Activated CD4-positive, alpha-beta T cell treated with anti-CD3 and anti-CD28 coated beads, Interleukin-2, amount 10 ng/mL, durations not matched to agents 24 days and 14 days (primary cell): ENCODE measurements at regions of chr10 and their contacts with region 1.

Region 1: GRCh38 chr10:28663576-28664313 is 13.6 kb upstream of the BAMBI start:
- DNase-seq: peak; percentile 90
- H3K4me3 Mint-ChIP-seq: no peak overlapping the region
- H3K27ac Mint-ChIP-seq: no peak overlapping the region
- H3K4me1 Mint-ChIP-seq: peaks cover 4% of the 10 kb centered on the region
- H3K27me3 Mint-ChIP-seq: peaks cover 33% of the 10 kb centered on the region

Region 2: DNA sequence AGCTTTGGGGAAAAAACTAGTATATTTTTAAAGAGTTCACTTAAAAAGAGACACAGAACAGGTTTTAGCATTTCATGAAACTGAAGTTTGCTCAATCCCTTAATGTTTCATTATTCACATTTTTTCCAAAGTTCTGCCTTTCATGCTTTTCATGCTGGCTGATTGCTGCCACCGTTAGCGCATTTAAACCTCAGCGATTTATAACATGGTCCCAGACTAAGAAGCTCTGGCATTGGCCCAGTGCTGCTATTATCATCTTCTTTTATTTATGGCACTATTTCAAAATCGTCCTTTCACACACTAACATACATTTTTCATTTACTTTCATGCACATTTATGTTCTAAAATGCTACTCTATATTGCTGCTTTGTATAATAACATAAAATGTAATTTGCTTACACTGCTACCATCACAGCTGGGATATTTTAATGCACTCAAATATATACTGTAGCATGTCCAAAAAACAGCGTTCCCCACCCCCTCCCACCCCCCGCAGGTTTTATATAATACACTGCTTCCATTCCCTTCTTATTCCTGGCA is 502.8 kb before region 1 on chr10:
- intact Hi-C with region 1: no loop called
- DNase-seq: no peak
- H3K4me3 Mint-ChIP-seq: no peak overlapping the region
- H3K27ac Mint-ChIP-seq: no peak overlapping the region
- H3K4me1 Mint-ChIP-seq: no peaks in the 10 kb centered on the region
- H3K27me3 Mint-ChIP-seq: no peaks in the 10 kb centered on the region

Region 3: GRCh38 chr10:28604567-28605536 is 58.9 kb before region 1 on chr10:
- intact Hi-C with region 1: loop called (anchors 2 kb)
- DNase-seq: no peak
- H3K4me3 Mint-ChIP-seq: no peak overlapping the region
- H3K27ac Mint-ChIP-seq: no peak overlapping the region
- H3K4me1 Mint-ChIP-seq: peaks cover 20% of the 10 kb centered on the region
- H3K27me3 Mint-ChIP-seq: no peaks in the 10 kb centered on the region

Region 4: DNA sequence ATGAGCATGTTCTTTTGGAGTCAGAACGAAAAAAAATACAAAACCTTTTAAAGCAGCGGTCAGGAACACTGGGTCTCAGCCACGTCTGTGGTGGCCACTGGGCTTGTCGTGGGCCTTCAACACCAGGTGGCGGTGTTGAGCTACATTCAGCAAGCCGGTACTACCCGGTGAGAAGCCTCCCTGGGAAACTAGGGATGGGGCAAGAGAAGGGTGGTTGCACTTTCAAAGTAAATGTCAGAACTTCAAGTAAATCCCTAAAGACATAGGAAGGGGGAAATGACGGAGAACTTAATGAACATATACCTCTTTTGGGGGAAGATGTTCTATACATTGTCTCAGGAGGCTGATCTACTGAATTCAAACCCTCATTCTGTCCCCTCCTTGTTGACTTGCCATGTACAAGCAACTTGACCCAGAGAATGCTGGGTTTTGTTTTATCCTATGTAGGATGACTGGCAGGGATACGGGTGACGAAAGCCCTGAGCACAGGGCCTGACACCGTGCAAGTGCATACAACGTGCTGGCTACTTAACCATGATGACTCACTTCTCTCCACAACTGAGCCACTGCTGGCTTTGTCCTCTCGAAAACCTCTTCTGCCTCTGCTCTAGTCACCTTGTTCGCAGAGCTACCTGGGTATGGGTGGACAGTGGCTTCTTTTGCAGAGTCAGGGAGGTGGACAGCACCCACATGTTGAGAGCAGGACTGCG is 35.4 kb before region 1 on chr10:
- intact Hi-C with region 1: loop called (anchors 1 kb)
- DNase-seq: peak; percentile 89
- H3K4me3 Mint-ChIP-seq: no peak overlapping the region
- H3K27ac Mint-ChIP-seq: no peak overlapping the region
- H3K4me1 Mint-ChIP-seq: peaks cover 2% of the 10 kb centered on the region
- H3K27me3 Mint-ChIP-seq: peaks cover 18% of the 10 kb centered on the region

Region 5: GRCh38 chr10:28754930-28755718 is 91.4 kb after region 1 on chr10:
- intact Hi-C with region 1: no loop called
- DNase-seq: no peak
- H3K4me3 Mint-ChIP-seq: no peak overlapping the region
- H3K27ac Mint-ChIP-seq: no peak overlapping the region
- H3K4me1 Mint-ChIP-seq: no peaks in the 10 kb centered on the region
- H3K27me3 Mint-ChIP-seq: peaks cover 4% of the 10 kb centered on the region

Region 6: DNA sequence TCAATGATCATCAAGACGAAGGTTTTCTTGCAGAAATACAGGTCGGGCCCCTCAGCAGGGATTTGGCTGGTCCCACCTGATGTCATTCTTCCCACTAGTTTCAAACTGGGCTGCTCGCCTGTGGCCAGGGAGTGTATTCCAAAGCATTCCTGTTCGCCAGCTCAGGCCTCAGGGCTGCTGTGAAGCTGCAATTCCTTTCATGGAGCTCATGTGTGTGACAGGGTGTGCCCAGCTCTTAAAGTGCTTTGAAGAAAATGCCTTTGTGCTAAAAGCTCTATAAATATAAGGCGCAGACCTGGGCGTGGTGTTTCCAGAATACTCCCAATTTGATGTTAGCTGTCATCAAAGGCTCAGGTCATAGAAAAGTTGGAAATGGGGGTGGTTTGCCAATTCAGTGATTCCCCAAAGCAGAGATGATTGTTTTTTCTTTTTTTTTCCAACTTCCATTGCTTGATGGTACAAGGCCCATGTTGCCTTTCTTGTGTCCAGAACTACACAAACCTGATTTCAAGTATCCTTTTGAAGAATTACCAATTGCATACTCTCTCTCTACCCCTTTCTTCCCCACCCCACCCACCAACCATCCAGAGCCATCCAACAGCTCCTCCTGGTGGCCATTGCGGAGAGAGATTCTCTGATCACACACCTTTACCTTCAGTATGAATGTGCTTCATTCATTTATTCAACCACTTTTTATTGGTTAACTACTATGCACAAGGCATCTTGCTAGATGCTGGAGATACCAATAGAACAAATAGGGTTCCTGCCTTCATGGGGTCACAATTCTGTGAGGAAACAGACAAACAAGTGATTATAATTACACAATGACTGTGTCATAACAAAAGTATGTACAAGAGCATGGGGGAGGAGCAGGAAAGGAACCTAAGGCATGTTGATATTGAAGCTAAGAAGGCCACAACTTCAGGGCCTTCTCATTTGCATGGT is 327.9 kb after region 1 on chr10:
- intact Hi-C with region 1: loop called (anchors 2 kb)
- DNase-seq: peak; percentile 73
- H3K4me3 Mint-ChIP-seq: no peak overlapping the region
- H3K27ac Mint-ChIP-seq: no peak overlapping the region
- H3K4me1 Mint-ChIP-seq: no peaks in the 10 kb centered on the region
- H3K27me3 Mint-ChIP-seq: no peaks in the 10 kb centered on the region

Region 7: DNA sequence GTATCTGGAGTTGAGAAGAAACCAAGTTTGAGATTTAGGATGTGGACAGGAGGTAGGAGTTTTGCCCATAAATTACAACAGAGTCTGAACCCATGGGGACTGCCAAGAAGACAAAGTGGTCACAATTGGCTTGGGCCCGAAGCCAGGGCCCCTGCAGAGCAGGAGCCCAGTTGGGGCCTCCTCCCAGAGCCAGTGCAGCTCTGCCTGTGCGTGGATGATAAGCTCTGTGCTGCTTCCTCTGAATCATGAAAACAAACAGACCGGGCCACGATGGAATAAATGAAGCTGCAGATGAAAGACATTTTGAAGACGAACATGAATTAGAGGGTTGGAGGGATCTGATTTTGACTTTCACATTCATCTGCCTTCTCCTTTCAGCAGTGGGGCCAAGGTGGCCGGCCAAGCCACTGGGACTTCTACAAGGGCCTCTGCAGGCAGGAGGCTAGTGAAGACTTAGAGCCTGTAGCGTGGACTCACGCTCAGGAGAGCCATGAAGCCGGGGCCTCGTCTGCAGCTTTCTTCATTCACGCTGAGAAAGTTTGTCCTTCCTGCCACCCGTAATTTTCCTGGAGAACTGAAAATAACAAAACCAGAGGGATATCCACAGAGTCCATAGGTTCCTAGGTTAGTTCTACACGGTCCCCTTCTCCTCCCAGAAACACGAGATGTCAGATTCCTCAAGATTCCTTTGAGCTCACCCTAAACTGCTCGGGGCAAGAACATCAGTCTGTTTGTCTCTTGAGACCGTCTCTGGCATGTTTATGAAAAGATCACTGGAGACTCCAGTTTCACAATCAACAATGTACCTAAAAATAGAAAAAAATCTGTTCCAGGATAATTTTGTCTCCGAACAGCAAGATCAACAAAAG is 468.4 kb after region 1 on chr10:
- intact Hi-C with region 1: loop called (anchors 10 kb)
- DNase-seq: no peak
- H3K4me3 Mint-ChIP-seq: no peak overlapping the region
- H3K27ac Mint-ChIP-seq: no peak overlapping the region
- H3K4me1 Mint-ChIP-seq: no peaks in the 10 kb centered on the region
- H3K27me3 Mint-ChIP-seq: peaks cover 8% of the 10 kb centered on the region

Region 8: GRCh38 chr10:29304264-29305030 is 640.7 kb after region 1 on chr10:
- intact Hi-C with region 1: loop called (anchors 1 kb)
- DNase-seq: peak; percentile 73
- H3K4me3 Mint-ChIP-seq: peak overlapping the region; percentile 8
- H3K27ac Mint-ChIP-seq: no peak overlapping the region
- H3K4me1 Mint-ChIP-seq: no peaks in the 10 kb centered on the region
- H3K27me3 Mint-ChIP-seq: peaks cover 6% of the 10 kb centered on the region